ENCODE measurements at regions of chr9 and their contacts with region 1.

Region 1: GRCh38 chr9:70111042-70111602 is 67.5 kb downstream of the MAMDC2 start:
- DNase-seq: peak; percentile 31
- ATAC-seq: peak; percentile 80
- H3K4me3 ChIP-seq: no peak overlapping the region
- H3K27ac ChIP-seq: no peak overlapping the region
- H3K4me1 ChIP-seq: peaks cover 28% of the 10 kb centered on the region
- H3K27me3 ChIP-seq: peaks cover 0 to 12% of the 10 kb centered on the region in 2 experiments; a peak in 2 of 5 replicates
- CTCF ChIP-seq: peak; percentile 79
- EP300 ChIP-seq: no peak
- POLR2A ChIP-seq: no peak
- RAD21 ChIP-seq: no peak

Region 2: DNA sequence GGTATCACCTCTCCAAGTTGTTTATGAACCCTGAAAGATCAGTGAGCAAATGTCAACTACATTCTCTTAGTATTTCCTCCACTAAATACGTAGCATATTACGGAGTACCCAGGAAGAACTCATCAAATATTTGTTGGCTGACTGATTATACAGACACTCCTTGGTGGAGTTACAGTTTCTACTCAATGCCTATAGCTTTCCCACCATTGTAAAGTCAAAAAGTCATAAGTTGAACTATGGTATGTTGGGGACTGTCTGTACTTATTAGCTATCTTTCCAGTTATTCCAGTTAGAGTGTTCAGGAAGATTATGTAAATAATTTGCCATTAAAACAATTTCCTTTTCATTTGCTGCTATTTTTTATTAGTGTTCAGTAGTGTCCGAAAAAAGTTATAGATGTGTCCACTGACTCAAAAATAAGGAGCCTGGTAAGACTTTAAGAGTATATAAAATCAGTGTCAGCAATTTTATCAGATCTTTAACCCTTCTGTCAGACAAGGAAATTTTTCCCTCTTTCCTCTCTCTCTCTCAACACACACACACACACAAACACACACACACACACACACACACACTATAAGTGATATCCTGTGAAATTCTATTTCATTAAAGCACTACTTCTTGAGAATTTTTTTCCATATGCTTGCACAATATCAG is 432.1 kb before region 1 on chr9:
- CTCF ChIA-PET with region 1: no interaction called
- POLR2A ChIA-PET with region 1: no interaction called
- in situ Hi-C with region 1: no loop called
- intact Hi-C with region 1: no loop called
- DNase-seq: no peak
- ATAC-seq: no peak
- H3K4me3 ChIP-seq: no peak overlapping the region
- H3K27ac ChIP-seq: no peak overlapping the region
- H3K4me1 ChIP-seq: no peaks in the 10 kb centered on the region
- H3K27me3 ChIP-seq: peaks cover 0 to 5% of the 10 kb centered on the region in 2 experiments; a peak in 1 of 5 replicates
- CTCF ChIP-seq: no peak
- EP300 ChIP-seq: no peak
- POLR2A ChIP-seq: no peak
- RAD21 ChIP-seq: no peak

Region 3: DNA sequence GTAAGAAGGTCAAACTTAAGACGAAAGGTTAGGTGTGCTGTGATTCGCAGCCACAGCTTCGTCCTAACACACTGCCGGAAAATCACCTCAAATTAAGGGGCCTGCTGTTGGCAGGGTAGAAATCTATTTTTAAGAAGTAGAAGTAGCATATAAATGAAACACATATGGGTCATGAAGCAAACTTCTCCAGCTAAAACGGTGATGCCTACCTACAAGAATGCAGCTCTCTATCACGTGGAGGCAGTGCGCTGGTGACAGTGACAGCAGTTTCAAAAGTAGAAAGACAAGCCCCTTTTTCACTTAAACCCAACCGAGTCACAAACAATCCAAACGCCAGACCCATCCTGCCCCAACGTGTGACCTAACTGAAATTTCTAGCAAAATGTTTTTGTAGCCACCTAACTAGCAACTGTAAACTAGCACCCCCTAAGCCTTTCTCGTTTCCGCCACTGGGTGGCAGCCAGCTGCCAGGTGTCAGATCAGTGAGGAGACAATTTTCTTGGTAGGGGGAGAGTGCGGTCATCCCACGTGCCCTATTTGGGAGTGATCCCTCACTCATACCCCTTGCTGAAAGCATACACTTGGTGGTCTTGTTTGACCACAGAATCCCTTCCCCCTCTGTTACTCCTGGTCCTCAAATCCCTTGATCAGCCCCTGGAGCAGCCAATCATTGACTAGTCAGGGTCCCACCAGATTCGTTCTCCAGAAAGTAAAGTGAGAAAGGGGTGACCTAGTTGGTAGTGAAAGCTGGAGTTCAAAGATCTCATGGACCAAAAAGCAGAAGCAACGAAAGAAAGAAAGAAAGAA is 139.3 kb before region 1 on chr9:
- CTCF ChIA-PET with region 1: interaction called, 13 read pairs
- POLR2A ChIA-PET with region 1: no interaction called
- in situ Hi-C with region 1: loop called (anchors 5 kb)
- intact Hi-C with region 1: loop called (anchors 1 kb)
- DNase-seq: peak; percentile 27
- ATAC-seq: peak; percentile 91
- H3K4me3 ChIP-seq: no peak overlapping the region
- H3K27ac ChIP-seq: no peak overlapping the region
- H3K4me1 ChIP-seq: no peaks in the 10 kb centered on the region
- H3K27me3 ChIP-seq: peaks cover 3 to 13% of the 10 kb centered on the region in 2 experiments; a peak in 2 of 5 replicates
- CTCF ChIP-seq: peak; percentile 90
- EP300 ChIP-seq: no peak
- POLR2A ChIP-seq: no peak
- RAD21 ChIP-seq: peak; percentile 65

Region 4: DNA sequence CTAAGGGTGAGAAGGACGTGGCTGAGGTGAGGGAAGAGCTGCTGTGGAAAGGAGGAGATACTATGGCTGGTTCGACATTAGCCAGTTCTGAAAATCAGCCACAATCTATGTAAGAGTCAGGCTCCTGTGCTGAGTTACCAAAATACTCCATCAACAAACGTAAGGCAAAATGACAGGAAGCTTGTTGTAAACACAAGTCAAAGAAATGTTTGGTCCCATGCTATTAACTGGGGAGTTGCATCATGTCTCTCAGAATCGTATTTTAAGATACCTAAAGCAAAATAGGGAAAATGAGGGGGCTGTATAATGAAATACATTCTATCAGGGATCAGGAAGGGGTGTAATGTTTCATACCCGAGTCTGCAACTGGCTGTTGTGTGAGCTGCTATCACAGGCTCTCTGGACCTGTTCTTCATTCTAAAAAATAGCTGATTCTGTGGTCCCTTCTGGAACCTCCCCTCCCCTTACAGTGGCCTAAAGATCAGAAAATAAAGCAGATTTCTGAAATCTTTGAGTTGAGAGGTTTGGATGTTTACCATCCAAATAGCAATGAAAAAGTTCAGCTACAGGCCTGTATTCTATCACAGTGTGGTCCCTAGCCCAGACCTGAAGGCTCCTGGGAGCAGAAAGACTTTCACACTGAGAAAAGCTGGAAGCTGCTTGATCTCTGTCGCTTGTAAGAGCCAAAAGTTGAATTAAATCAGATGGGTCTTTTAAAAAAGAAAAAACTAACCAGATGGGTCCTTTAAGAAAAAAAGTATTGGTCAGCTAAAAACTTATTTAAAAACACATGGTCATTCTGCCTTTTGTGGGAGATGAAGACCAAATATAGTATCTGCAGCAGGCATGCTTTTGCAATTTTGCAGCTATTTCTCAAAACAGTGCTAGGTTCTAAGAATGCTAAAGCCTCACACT is 49.8 kb after region 1 on chr9:
- CTCF ChIA-PET with region 1: no interaction called
- POLR2A ChIA-PET with region 1: no interaction called
- in situ Hi-C with region 1: no loop called
- intact Hi-C with region 1: no loop called
- DNase-seq: no peak
- ATAC-seq: no peak
- H3K4me3 ChIP-seq: no peak overlapping the region
- H3K27ac ChIP-seq: no peak overlapping the region
- H3K4me1 ChIP-seq: no peaks in the 10 kb centered on the region
- H3K27me3 ChIP-seq: no peaks in the 10 kb centered on the region
- CTCF ChIP-seq: no peak
- EP300 ChIP-seq: no peak
- POLR2A ChIP-seq: no peak
- RAD21 ChIP-seq: no peak